ENCODE measurements at regions of chr20 and their contacts with region 1.

Region 1: GRCh38 chr20:8853805-8854338 is 215.0 kb upstream of the PLCB4 start:
- DNase-seq: peak; percentile 79
- H3K4me3 Mint-ChIP-seq: no peak overlapping the region
- H3K27ac Mint-ChIP-seq: no peak overlapping the region
- H3K4me1 Mint-ChIP-seq: peaks cover 14% of the 10 kb centered on the region
- H3K27me3 Mint-ChIP-seq: no peaks in the 10 kb centered on the region
- CTCF ChIP-seq: peak; percentile 67

Region 2: DNA sequence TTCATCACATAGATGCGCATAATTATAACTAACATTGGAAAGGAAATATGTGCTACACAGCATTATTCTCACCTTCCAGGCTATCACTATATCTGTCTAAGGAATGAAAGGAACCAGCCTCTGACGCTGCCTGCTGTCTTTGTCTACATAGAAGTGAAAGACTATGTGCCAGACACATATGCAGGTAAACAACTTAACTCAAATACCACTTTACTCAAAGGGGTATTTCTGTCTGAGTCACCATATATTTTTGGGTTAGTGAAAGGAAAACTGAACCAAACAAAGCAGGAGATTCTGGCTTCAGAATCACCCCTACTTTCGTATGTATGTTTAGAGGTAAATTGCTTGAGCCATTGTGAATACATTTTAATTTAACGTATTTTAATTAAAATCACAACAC is 113.6 kb before region 1 on chr20:
- CTCF ChIA-PET with region 1: no interaction called
- POLR2A ChIA-PET with region 1: no interaction called
- intact Hi-C with region 1: no loop called
- DNase-seq: no peak
- H3K4me3 Mint-ChIP-seq: no peak overlapping the region
- H3K27ac Mint-ChIP-seq: no peak overlapping the region
- H3K4me1 Mint-ChIP-seq: no peaks in the 10 kb centered on the region
- H3K27me3 Mint-ChIP-seq: no peaks in the 10 kb centered on the region
- CTCF ChIP-seq: no peak

Region 3: GRCh38 chr20:8790442-8791074 is 63.3 kb before region 1 on chr20:
- CTCF ChIA-PET with region 1: interaction called, 29 read pairs
- POLR2A ChIA-PET with region 1: interaction called, 3 read pairs
- intact Hi-C with region 1: loop called (anchors 5 kb)
- DNase-seq: peak; percentile 69
- H3K4me3 Mint-ChIP-seq: no peak overlapping the region
- H3K27ac Mint-ChIP-seq: no peak overlapping the region
- H3K4me1 Mint-ChIP-seq: no peaks in the 10 kb centered on the region
- H3K27me3 Mint-ChIP-seq: peaks cover 26% of the 10 kb centered on the region
- CTCF ChIP-seq: peak; percentile 95

Region 4: GRCh38 chr20:8842525-8842924 is 11.3 kb before region 1 on chr20:
- CTCF ChIA-PET with region 1: interaction called, 22 read pairs
- POLR2A ChIA-PET with region 1: no interaction called
- intact Hi-C with region 1: no loop called
- DNase-seq: no peak
- H3K4me3 Mint-ChIP-seq: no peak overlapping the region
- H3K27ac Mint-ChIP-seq: no peak overlapping the region
- H3K4me1 Mint-ChIP-seq: no peaks in the 10 kb centered on the region
- H3K27me3 Mint-ChIP-seq: no peaks in the 10 kb centered on the region
- CTCF ChIP-seq: no peak

Region 5: GRCh38 chr20:8909596-8909995 is 55.7 kb after region 1 on chr20:
- CTCF ChIA-PET with region 1: interaction called, 10 read pairs
- POLR2A ChIA-PET with region 1: no interaction called
- intact Hi-C with region 1: no loop called
- DNase-seq: no peak
- H3K4me3 Mint-ChIP-seq: no peak overlapping the region
- H3K27ac Mint-ChIP-seq: no peak overlapping the region
- H3K4me1 Mint-ChIP-seq: no peaks in the 10 kb centered on the region
- H3K27me3 Mint-ChIP-seq: no peaks in the 10 kb centered on the region
- CTCF ChIP-seq: no peak

Region 6: GRCh38 chr20:9119776-9120175 is 265.9 kb after region 1 on chr20:
- CTCF ChIA-PET with region 1: interaction called, 8 read pairs
- POLR2A ChIA-PET with region 1: no interaction called
- intact Hi-C with region 1: loop called (anchors 5 kb)
- DNase-seq: peak; percentile 69
- H3K4me3 Mint-ChIP-seq: peak overlapping the region; percentile 12
- H3K27ac Mint-ChIP-seq: peak overlapping the region; percentile 13
- H3K4me1 Mint-ChIP-seq: peaks cover 16% of the 10 kb centered on the region
- H3K27me3 Mint-ChIP-seq: no peaks in the 10 kb centered on the region
- CTCF ChIP-seq: no peak

Region 7: GRCh38 chr20:9344083-9344920 is 490.4 kb after region 1 on chr20:
- CTCF ChIA-PET with region 1: interaction called, 19 read pairs
- POLR2A ChIA-PET with region 1: interaction called, 3 read pairs
- intact Hi-C with region 1: no loop called
- DNase-seq: peak; percentile 66
- H3K4me3 Mint-ChIP-seq: no peak overlapping the region
- H3K27ac Mint-ChIP-seq: no peak overlapping the region
- H3K4me1 Mint-ChIP-seq: peaks cover 16% of the 10 kb centered on the region
- H3K27me3 Mint-ChIP-seq: no peaks in the 10 kb centered on the region
- CTCF ChIP-seq: no peak

Region 8: DNA sequence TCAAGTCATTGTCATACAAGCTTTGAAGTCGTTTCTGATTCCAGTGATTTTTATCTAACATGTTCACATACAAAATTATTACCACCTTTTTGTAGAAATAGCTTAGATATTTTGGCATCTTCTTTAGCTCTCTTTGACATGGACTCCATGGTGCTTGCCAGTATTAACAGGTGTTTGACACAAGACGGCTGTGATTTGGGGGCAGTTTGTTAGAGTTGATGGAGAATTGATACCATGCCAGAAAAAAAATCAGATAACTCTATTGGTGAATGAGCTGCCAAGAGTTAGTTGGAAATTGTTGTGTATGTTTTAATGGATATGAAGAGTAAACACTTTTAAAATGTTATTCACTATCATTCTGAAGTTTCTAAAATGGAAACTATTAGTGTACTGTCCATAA is 513.9 kb after region 1 on chr20:
- CTCF ChIA-PET with region 1: interaction called, 37 read pairs
- POLR2A ChIA-PET with region 1: no interaction called
- intact Hi-C with region 1: no loop called
- DNase-seq: no peak
- H3K4me3 Mint-ChIP-seq: no peak overlapping the region
- H3K27ac Mint-ChIP-seq: no peak overlapping the region
- H3K4me1 Mint-ChIP-seq: no peaks in the 10 kb centered on the region
- H3K27me3 Mint-ChIP-seq: no peaks in the 10 kb centered on the region
- CTCF ChIP-seq: no peak